Common myeloid progenitor, CD34-positive (primary cell): ENCODE measurements at regions of chr19 and their contacts with region 1.

Region 1: DNA sequence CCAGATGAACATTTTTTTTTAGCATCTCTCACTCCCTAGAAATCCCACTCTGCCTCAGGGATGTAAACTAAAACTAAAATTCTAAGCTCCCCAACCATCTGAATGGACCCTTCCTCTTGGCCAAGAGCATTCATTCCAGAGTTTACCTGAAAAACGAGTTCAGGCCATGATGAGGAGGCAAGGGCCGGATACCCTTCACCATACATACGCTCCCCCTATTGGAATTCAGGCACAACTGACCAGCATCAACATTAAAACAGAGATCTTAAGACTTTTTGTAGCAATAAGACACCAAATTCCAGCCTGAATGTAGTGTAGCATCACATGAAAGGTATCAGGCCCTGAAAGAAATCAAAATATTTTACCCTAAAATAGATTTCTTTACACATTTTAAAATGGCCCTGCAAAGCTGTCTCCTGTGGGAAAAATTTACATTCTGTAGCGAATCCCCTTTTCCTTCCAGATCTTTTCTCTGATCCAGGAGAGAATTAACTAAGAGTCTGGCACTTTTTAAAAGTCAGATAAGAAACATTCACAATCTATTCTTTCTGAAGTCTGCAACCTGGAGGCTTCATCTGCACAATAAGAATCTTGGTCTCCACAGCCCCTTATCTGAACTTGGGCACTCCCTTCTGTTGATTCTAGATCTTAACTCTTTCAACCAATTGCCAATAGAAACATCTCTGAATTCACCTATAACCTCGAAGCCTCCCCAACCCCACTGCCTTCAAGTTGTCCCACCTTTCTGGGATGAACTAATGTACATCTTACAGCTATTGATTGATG is 888.5 kb downstream of the UQCRFS1 start:
- DNase-seq: no peak
- H3K4me3 ChIP-seq: no peak overlapping the region
- H3K27ac ChIP-seq: no peak overlapping the region
- H3K4me1 ChIP-seq: peaks cover 0 to 6% (median 0%) of the 10 kb centered on the region in 4 experiments
- H3K27me3 ChIP-seq: peaks cover 0 to 2% (median 0%) of the 10 kb centered on the region in 5 experiments

Region 2: GRCh38 chr19:28242297-28242927 is 82.1 kb before region 1 on chr19:
- CTCF ChIA-PET with region 1: interaction called, 15 read pairs
- POLR2A ChIA-PET with region 1: no interaction called
- DNase-seq: peak; percentile 27 to 58 (median 39)
- H3K4me3 ChIP-seq: no peak overlapping the region
- H3K27ac ChIP-seq: no peak overlapping the region
- H3K4me1 ChIP-seq: no peaks in the 10 kb centered on the region
- H3K27me3 ChIP-seq: peaks cover 0 to 2% (median 0%) of the 10 kb centered on the region in 5 experiments

Region 3: DNA sequence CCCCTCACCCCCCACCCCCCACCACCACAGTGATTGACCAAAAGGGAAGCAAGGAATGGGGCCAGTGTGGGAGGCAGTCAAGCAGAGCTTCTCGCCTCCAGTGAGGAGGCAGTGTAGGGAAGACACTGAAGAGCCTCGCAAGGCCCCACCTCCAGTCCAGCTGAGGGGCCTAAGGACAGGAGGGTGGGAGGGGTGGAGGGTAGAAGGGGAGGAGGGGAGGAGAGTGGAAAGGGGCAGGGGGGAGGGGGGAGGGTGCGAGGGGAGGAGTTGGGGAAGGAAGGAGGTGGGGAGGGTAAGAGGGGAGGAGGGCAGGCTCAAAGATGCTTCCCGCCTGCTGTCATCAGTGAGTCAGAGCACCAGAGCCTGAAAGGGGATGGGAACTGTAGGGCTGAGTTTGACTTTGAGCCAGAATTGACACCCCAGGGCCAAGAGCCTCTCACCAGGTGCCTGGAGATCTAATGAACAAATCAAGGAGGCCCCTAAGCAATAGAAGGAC is 102.3 kb after region 1 on chr19:
- CTCF ChIA-PET with region 1: no interaction called
- POLR2A ChIA-PET with region 1: no interaction called
- DNase-seq: peak in 2 of 3 donors; percentile 44 to 59
- H3K4me3 ChIP-seq: no peak overlapping the region
- H3K27ac ChIP-seq: no peak overlapping the region
- H3K4me1 ChIP-seq: peaks cover 0 to 31% (median 6%) of the 10 kb centered on the region in 4 experiments
- H3K27me3 ChIP-seq: peaks cover 0 to 3% (median 0%) of the 10 kb centered on the region in 5 experiments